WTC11 (cell line): ENCODE measurements at regions of chr17 and their contacts with region 1.

Region 1: DNA sequence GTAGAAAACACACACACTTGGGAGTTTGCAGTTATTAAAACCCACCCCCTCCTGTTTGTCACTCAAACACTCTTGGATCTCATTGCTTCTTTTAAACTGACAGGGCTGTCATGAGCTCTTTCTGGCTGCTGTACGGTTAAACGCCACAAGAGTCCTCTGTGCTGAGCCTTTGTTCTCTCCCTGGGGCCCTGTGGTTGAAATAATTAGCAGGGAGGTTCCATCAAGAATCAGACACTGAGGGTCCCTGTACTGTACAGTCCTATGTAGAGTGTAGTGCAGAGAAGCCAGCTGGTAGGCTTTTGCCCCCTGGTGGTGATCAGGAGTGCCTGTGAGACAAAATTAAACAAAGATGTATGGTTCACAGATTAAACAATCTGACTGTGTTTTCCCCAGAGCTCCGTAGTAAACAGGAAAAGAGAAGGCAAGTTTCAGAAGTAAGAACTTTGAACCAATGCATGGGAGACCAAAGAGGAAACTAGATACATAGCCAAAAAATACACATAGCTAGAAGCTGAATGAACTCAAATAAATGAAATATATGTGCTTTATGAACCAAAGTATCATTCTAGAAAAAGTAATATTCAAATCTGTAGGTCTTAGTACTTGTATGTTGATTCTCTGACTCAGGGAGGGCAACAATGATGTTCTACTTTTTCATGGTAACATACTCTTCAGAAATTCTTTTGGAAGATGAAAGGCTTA is 1.4 kb upstream of the SSH2 start:
- DNase-seq: peak; percentile 23
- ATAC-seq: peak; percentile 10
- H3K4me3 Mint-ChIP-seq: no peak overlapping the region
- H3K27ac Mint-ChIP-seq: no peak overlapping the region
- H3K4me1 Mint-ChIP-seq: peaks cover 12% of the 10 kb centered on the region
- H3K27me3 Mint-ChIP-seq: no peaks in the 10 kb centered on the region
- CTCF ChIP-seq: peak; percentile 61; the same call in 1 of the 2 replicates

Region 2: DNA sequence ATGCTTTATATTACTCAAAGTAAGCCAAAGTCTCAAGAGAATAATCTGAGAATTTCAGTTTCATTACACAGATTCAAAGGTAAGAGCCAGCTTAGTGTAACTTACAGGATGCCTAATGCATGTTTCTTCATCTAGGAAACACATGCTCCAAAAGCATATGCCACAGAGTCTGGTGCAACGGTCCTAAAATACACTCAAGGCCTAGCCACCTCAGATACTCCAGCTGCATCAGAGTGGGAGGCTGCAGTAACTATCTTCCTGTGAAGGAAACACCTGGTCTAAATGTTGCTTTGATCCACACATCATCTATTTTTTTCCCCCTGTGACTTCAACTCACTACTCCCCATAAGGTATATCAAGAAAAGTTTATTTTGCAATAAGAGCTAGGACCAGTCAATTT is 257.1 kb before region 1 on chr17:
- CTCF ChIA-PET with region 1: no interaction called
- POLR2A ChIA-PET with region 1: no interaction called
- DNase-seq: no peak
- ATAC-seq: no peak
- H3K4me3 Mint-ChIP-seq: no peak overlapping the region
- H3K27ac Mint-ChIP-seq: no peak overlapping the region
- H3K4me1 Mint-ChIP-seq: no peaks in the 10 kb centered on the region
- H3K27me3 Mint-ChIP-seq: no peaks in the 10 kb centered on the region
- CTCF ChIP-seq: no peak

Region 3: DNA sequence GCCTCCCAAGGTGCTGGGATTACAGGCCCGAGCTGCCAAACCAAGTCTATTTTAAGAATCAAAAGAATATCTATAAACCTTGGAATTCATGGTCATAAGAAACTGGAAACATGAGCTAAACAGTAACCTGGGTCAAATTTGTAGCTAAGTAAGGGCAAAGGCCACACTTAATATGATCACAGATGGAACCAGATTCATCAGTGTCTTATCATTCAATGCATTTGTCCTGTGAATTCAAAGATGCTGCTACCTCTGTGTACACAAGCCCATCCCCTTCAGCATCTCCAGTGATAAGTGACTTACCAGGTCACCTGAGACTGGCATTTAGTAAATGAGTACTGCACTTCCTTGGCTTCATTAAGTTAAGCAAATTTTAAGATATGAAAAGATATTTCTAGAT is 109.5 kb before region 1 on chr17:
- CTCF ChIA-PET with region 1: interaction called, 11 read pairs
- POLR2A ChIA-PET with region 1: no interaction called
- DNase-seq: no peak
- ATAC-seq: no peak
- H3K4me3 Mint-ChIP-seq: no peak overlapping the region
- H3K27ac Mint-ChIP-seq: no peak overlapping the region
- H3K4me1 Mint-ChIP-seq: peaks cover 9% of the 10 kb centered on the region
- H3K27me3 Mint-ChIP-seq: no peaks in the 10 kb centered on the region
- CTCF ChIP-seq: no peak

Region 4: DNA sequence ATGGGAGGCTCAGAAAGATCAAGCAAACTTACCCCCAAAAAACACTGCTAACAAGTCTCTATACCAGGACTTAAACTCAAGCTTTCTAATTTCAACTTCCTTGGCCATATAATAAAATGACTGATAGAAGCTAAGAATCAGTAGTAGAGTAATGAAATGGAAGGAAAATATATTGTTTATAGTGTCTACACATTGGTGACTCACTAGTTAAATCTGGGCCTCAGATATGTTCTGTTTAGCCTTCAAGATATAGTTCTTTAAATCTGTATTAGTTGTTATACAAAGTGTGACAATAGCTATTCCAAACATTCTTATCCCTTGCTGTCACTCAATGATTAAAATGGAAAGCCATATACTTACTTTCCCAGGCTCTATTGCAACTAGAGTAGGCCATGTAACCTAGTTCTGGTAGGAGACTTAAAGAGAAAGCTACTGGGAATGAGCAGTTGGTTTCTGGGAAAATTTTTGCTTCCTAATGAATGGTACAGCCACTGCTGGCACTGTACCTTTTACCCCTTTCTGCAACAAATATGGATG is 19.7 kb before region 1 on chr17:
- CTCF ChIA-PET with region 1: interaction called, 12 read pairs
- POLR2A ChIA-PET with region 1: no interaction called
- DNase-seq: no peak
- ATAC-seq: no peak
- H3K4me3 Mint-ChIP-seq: no peak overlapping the region
- H3K27ac Mint-ChIP-seq: no peak overlapping the region
- H3K4me1 Mint-ChIP-seq: no peaks in the 10 kb centered on the region
- H3K27me3 Mint-ChIP-seq: no peaks in the 10 kb centered on the region
- CTCF ChIP-seq: no peak

Region 5: DNA sequence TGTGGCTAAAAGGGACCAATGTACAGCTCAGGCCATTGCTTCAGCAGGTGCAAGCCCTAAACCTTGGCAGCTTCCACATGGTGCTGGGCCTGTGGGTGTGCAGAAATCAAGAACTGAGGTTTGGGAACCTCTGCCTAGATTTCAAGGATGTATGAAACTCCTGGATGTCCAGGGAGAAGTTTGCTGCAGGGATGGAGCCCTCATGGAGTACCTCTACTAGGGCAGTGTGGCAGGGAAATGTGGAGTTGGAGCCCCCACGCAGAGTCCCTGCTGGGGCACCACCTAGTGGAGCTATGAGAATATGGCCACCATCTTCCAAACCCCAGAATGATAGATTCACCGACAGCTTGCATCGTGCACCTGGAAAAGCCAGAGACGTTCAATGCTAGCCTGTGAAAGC is 23.0 kb after region 1 on chr17:
- CTCF ChIA-PET with region 1: interaction called, 11 read pairs
- POLR2A ChIA-PET with region 1: no interaction called
- DNase-seq: no peak
- ATAC-seq: no peak
- H3K4me3 Mint-ChIP-seq: no peak overlapping the region
- H3K27ac Mint-ChIP-seq: no peak overlapping the region
- H3K4me1 Mint-ChIP-seq: peaks cover 2% of the 10 kb centered on the region
- H3K27me3 Mint-ChIP-seq: peaks cover 9% of the 10 kb centered on the region; the same call in 1 of the 2 replicates
- CTCF ChIP-seq: peak; percentile 28; the same call in 1 of the 2 replicates

Region 6: GRCh38 chr17:30000001-30000754 is 68.8 kb after region 1 on chr17:
- CTCF ChIA-PET with region 1: no interaction called
- POLR2A ChIA-PET with region 1: no interaction called
- DNase-seq: no peak
- ATAC-seq: no peak
- H3K4me3 Mint-ChIP-seq: no peak overlapping the region
- H3K27ac Mint-ChIP-seq: no peak overlapping the region
- H3K4me1 Mint-ChIP-seq: no peaks in the 10 kb centered on the region
- H3K27me3 Mint-ChIP-seq: peaks cover 5% of the 10 kb centered on the region
- CTCF ChIP-seq: no peak